ENCODE measurements at regions of chr20 and their contacts with region 1.

Region 1: GRCh38 chr20:34312544-34313217 is 9.5 kb upstream of the AHCY start:
- DNase-seq: peak; percentile 92
- H3K4me3 ChIP-seq: peak overlapping the region in 3 of 4 donors; percentile 3 to 35 (median 18)
- H3K27ac ChIP-seq: peak overlapping the region in 3 of 4 donors; percentile 71 to 79 (median 76)
- H3K4me1 ChIP-seq: peaks cover 6 to 30% (median 24%) of the 10 kb centered on the region in 4 donors
- H3K27me3 ChIP-seq: peaks cover 13% of the 10 kb centered on the region
- CTCF ChIP-seq: peak; percentile 98 to 100 (median 99)
- EP300 ChIP-seq: no peak
- POLR2A ChIP-seq: no peak

Region 2: DNA sequence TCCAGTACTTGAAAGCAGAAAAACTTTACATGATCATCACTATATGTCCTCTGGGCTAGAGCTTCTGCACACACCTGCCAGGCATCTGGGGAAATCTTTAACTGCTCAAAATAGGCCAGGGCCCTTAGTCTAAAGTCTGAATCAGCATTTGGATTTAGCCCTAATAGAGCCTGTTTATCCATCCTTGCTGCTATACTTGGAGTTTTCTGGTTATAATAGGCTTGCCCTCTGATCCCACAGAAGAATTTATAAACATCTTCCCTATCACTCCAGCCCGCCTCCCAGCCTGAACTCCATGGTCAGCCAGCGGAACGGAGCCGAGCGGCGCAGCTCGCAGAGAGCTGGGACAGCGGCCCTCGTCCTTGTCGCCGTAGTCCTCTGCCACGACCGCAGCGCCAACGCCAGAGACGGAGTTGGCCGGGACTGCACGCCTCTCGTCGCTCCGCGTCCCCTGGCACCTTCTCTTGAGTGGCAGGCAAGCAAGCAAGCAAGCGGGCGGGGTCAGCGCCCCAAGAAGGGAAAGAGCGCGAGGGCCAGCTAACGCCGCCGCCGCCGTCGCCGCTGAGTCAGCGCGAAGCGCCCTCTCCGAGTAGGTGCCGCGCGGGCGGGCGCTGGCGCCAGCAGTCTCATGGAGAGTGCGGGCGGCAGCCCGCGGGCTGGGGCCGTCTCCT is 96.8 kb before region 1 on chr20:
- in situ Hi-C with region 1: no loop called
- intact Hi-C with region 1: no loop called
- DNase-seq: peak; percentile 78
- H3K4me3 ChIP-seq: peak overlapping the region; percentile 22 to 50 (median 28)
- H3K27ac ChIP-seq: peak overlapping the region; percentile 35 to 75 (median 54)
- H3K4me1 ChIP-seq: peaks cover 0 to 13% (median 5%) of the 10 kb centered on the region in 4 donors
- H3K27me3 ChIP-seq: peaks cover 31% of the 10 kb centered on the region
- CTCF ChIP-seq: peak in 1 of 5 experiments; percentile 6
- EP300 ChIP-seq: no peak
- POLR2A ChIP-seq: no peak

Region 3: DNA sequence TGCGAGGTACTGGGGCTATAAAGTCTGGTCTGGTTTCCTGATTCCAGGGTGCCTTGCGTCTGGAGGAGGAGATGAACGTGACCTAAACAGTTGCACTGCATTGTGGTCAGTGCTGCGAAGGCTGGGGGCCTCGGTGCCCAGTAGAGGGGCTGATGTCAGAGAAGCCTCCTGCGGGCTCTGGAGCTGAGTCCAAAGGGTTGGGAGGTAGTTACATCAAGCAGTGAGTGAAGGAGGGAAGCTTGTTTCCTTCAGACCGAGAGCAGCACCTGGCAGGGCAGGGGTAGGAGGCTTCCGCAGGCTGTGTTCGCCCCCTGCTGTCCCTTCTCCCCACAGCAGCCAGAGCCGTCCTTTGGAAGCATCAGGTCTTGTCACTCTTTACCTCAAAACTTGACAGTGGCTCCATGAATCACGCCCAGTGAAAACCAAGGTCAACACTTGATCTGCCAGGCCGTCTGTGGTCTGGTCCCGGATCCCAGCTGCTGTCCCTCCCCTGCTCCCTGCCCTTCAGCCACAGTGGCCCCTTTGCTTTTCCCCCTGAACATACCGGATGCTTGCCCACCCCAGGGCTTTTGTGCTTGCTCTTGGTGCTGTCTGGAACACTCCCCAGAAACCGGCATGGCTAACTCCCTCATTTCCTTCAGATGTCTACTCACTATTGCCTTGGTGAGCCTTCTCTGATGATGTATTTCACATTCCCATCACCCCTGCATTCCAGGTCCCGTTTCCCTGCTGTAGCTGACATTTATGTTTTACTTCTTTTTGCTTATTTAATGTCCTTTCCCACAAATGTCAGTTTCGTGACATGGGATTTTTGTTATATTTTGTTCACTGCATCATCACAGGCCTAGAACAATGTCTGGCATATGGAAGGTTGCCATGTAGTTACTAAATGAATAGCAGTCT is 210.5 kb after region 1 on chr20:
- in situ Hi-C with region 1: loop called in 3 of 4 experiments (anchors 10 to 25 kb)
- intact Hi-C with region 1: no loop called
- DNase-seq: peak; percentile 72
- H3K4me3 ChIP-seq: peak overlapping the region in 1 of 4 donors; percentile 4
- H3K27ac ChIP-seq: peak overlapping the region; percentile 71 to 91 (median 78)
- H3K4me1 ChIP-seq: peaks cover 32 to 74% (median 41%) of the 10 kb centered on the region in 4 donors
- H3K27me3 ChIP-seq: no peaks in the 10 kb centered on the region
- CTCF ChIP-seq: peak; percentile 41 to 65 (median 54)
- EP300 ChIP-seq: no peak
- POLR2A ChIP-seq: peak; percentile 18

Region 4: GRCh38 chr20:34713194-34713943 is 400.7 kb after region 1 on chr20:
- in situ Hi-C with region 1: loop called in 1 of 4 experiments (anchors 25 kb)
- intact Hi-C with region 1: loop called (anchors 2 kb)
- DNase-seq: no peak
- H3K4me3 ChIP-seq: no peak overlapping the region
- H3K27ac ChIP-seq: no peak overlapping the region
- H3K4me1 ChIP-seq: peaks cover 8 to 15% (median 14%) of the 10 kb centered on the region in 4 donors
- H3K27me3 ChIP-seq: no peaks in the 10 kb centered on the region
- CTCF ChIP-seq: no peak
- EP300 ChIP-seq: no peak
- POLR2A ChIP-seq: no peak

Measured in transverse colon (tissue), 4 donors.